ENCODE measurements at regions of chr11 and their contacts with region 1.

Region 1: GRCh38 chr11:64000026-64000739 is 13.9 kb downstream of the OTUB1 start:
- DNase-seq: peak; percentile 70 to 73
- H3K4me3 ChIP-seq: peak overlapping the region in 1 of 3 donors; percentile 6
- H3K27ac ChIP-seq: no peak overlapping the region
- H3K4me1 ChIP-seq: peaks cover 18 to 38% of the 10 kb centered on the region in 2 donors
- H3K27me3 ChIP-seq: no peaks in the 10 kb centered on the region
- CTCF ChIP-seq: peak; percentile 24 to 94 (median 86)
- POLR2A ChIP-seq: no peak

Region 2: GRCh38 chr11:64088162-64089026 is 88.2 kb after region 1 on chr11:
- intact Hi-C with region 1: loop called (anchors 10 kb)
- DNase-seq: peak; percentile 58 to 60
- H3K4me3 ChIP-seq: no peak overlapping the region
- H3K27ac ChIP-seq: peak overlapping the region; percentile 63 to 82 (median 81)
- H3K4me1 ChIP-seq: peaks cover 29 to 59% of the 10 kb centered on the region in 2 donors
- H3K27me3 ChIP-seq: no peaks in the 10 kb centered on the region
- CTCF ChIP-seq: peak in 4 of 6 experiments; percentile 23 to 69 (median 62)
- POLR2A ChIP-seq: no peak